ENCODE measurements at regions of chr18 and their contacts with region 1.

Region 1: GRCh38 chr18:48940854-48941611 is 9.7 kb downstream of the SMAD7 start:
- DNase-seq: peak; percentile 95
- ATAC-seq: peak; percentile 83
- H3K4me3 Mint-ChIP-seq: peak overlapping the region; percentile 76
- H3K27ac Mint-ChIP-seq: peak overlapping the region; percentile 94
- H3K4me1 Mint-ChIP-seq: peaks cover 99% of the 10 kb centered on the region
- H3K27me3 Mint-ChIP-seq: no peaks in the 10 kb centered on the region

Region 2: DNA sequence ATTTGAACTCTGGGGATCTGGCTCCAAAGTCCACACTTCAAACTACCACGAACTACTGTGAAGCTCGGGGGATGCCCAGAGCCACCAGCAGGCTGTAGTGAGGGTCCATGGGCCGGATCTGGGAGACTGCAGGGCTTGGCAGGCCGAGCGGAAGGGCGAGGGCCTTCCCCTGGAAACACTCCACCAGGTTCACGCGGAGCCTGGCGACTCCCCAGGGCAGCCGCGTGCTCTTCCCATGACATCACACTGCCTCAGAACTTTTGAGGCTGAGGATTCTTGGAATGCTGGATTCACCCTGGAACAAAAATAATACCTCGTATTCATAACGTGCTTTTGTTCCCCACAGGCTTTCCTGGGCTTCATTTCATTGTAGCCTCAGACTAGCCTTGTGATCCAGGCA is 191.3 kb before region 1 on chr18:
- CTCF ChIA-PET with region 1: no interaction called
- POLR2A ChIA-PET with region 1: no interaction called
- DNase-seq: no peak
- ATAC-seq: no peak
- H3K4me3 Mint-ChIP-seq: no peak overlapping the region
- H3K27ac Mint-ChIP-seq: no peak overlapping the region
- H3K4me1 Mint-ChIP-seq: peaks cover 2% of the 10 kb centered on the region
- H3K27me3 Mint-ChIP-seq: peaks cover 2% of the 10 kb centered on the region

Region 3: DNA sequence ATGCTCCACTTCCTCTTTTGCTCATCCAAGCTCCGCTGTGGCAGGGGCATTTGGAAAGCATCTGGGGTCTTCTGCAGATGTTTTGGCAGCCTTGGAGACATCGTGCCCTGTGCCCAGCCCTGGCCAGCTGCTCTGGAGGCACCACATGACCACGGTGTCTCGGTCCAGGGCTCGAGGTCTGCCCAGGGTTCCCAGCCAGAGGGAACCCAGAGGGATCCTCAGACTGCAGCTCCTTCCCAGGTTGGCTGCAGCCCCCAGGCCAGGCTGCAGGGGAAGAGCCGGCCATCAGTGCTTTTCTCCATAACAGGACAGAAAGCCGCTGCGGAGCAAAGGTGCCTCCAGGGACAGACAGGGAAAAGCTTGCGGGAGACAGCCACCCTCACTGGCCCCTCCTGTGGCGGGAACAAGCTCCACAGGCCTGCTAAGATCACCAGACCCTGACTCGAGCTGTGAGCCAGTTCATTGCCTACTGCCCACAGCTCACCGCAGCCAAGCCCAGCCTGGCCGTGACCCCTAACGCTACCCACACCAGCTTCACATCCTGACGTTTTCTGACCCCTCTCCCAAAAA is 65.0 kb before region 1 on chr18:
- CTCF ChIA-PET with region 1: no interaction called
- POLR2A ChIA-PET with region 1: no interaction called
- DNase-seq: no peak
- ATAC-seq: no peak
- H3K4me3 Mint-ChIP-seq: no peak overlapping the region
- H3K27ac Mint-ChIP-seq: no peak overlapping the region
- H3K4me1 Mint-ChIP-seq: peaks cover 20% of the 10 kb centered on the region
- H3K27me3 Mint-ChIP-seq: peaks cover 3% of the 10 kb centered on the region

Region 4: DNA sequence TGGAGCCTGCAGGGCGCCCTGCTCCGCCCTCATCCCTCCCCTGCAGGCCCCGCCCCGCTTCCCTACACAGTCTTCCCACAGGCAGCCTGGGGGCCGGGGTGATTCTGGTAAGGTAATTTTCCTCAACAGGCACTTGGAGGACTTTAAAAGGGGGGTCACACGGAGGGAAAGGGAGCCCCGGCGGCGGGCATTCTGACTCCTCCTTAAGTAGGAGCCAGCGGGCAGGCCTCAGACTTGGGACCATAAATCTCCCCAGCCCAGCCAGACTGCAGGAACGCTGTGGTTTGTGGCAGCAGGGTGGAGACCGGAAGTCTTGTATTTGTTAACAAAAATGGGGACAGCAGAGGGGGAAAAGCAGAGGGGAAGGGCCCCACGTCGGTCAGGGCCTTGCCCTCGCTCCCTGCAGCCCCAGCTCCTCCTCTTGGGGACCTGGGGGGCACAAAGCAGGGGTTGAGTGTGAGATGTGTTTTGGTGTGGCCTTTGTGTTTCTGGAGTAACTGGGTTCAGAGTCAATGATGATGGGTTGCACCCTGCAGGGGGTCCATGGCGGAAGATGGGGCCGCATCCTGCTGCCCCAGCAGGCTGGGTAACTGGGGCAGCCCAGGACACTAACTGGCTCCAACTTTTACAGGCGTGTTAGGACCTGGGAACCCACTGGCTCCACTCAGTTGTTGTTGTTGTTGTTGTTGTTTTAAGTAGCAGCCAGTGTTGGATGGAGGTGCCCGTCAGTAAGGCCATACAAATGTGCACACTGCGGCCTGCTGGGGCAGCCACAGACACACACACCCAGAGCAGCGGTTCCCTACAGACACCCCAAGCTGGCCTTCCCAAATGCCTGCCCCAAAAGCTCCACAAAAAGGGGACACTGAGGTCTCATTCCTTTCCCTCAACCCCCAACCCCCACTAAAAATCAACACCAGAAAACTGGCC is 18.0 kb before region 1 on chr18:
- CTCF ChIA-PET with region 1: interaction called, 11 read pairs
- POLR2A ChIA-PET with region 1: interaction called, 7 read pairs
- DNase-seq: no peak
- ATAC-seq: peak; percentile 17
- H3K4me3 Mint-ChIP-seq: peak overlapping the region; percentile 66
- H3K27ac Mint-ChIP-seq: peak overlapping the region; percentile 93
- H3K4me1 Mint-ChIP-seq: peaks cover 78% of the 10 kb centered on the region
- H3K27me3 Mint-ChIP-seq: no peaks in the 10 kb centered on the region

Region 5: GRCh38 chr18:48951448-48952286 is 10.6 kb after region 1 on chr18:
- CTCF ChIA-PET with region 1: interaction called, 6 read pairs
- POLR2A ChIA-PET with region 1: interaction called, 14 read pairs
- DNase-seq: peak; percentile 83
- ATAC-seq: peak; percentile 57
- H3K4me3 Mint-ChIP-seq: peak overlapping the region; percentile 94
- H3K27ac Mint-ChIP-seq: peak overlapping the region; percentile 81
- H3K4me1 Mint-ChIP-seq: peaks cover 39% of the 10 kb centered on the region
- H3K27me3 Mint-ChIP-seq: peaks cover 5% of the 10 kb centered on the region

Measured in activated CD8-positive, alpha-beta T cell treated with anti-CD3 and anti-CD28 coated beads, Interleukin-2, amount 10 ng/mL, durations not matched to agents 7 days and 5 days (primary cell).